ENCODE measurements at regions of chr11 and their contacts with region 1.

Region 1: GRCh38 chr11:71977743-71978418 is 20.8 kb upstream of the IL18BP start:
- DNase-seq: peak in 5 of 10 donors; percentile 55 to 82 (median 62)
- H3K4me3 ChIP-seq: no peak overlapping the region
- H3K27ac ChIP-seq: peak overlapping the region in 26 of 59 donors; percentile 1 to 86 (median 42)
- H3K27me3 ChIP-seq: no peaks in the 10 kb centered on the region
- CTCF ChIP-seq: peak; percentile 62 to 89 (median 80)

Region 2: GRCh38 chr11:71962428-71963038 is 15.3 kb before region 1 on chr11:
- intact Hi-C with region 1: no loop called
- DNase-seq: no peak
- H3K4me3 ChIP-seq: no peak overlapping the region
- H3K27ac ChIP-seq: peak overlapping the region in 18 of 59 donors; percentile 0 to 47 (median 29)
- H3K27me3 ChIP-seq: no peaks in the 10 kb centered on the region
- CTCF ChIP-seq: no peak

Region 3: DNA sequence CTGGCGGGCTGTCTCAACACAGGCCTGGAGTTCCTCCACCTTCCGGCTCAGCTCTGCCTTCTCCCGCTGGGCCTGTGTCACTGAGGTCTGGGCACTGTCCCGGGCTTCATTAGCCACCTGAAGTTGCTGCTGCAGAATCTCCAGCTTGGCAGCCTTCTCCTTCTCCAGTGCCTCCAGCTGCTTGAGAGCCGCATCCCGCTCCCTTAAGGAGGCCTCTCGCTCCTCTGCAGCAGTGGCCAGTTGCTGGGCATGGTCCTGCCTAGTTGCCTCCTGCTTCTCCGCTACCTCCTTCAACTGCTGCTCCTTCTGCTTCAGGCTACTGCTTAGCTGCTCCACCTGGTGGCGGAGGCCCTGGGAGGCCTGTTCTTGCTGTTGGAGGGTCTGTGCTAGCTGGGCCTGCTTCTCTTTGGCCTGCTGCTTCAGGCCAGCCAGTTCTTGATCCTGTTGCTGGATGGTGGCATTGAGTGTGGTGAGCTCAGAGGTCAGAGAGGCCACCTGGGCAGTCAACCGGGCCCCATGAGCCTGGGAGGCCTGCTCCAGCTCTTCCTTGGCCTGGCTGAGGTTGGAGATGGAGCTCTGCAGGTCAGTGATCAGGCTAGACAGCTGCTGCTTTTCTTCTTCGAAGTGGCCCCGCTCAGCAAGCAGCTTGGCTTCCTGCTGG is 37.8 kb after region 1 on chr11:
- intact Hi-C with region 1: loop called (anchors 5 kb)
- DNase-seq: peak in 2 of 10 donors; percentile 40 to 45
- H3K4me3 ChIP-seq: no peak overlapping the region
- H3K27ac ChIP-seq: peak overlapping the region in 51 of 59 donors; percentile 13 to 92 (median 84)
- H3K27me3 ChIP-seq: no peaks in the 10 kb centered on the region
- CTCF ChIP-seq: peak in 52 of 56 donors; percentile 13 to 58 (median 42)

Region 4: DNA sequence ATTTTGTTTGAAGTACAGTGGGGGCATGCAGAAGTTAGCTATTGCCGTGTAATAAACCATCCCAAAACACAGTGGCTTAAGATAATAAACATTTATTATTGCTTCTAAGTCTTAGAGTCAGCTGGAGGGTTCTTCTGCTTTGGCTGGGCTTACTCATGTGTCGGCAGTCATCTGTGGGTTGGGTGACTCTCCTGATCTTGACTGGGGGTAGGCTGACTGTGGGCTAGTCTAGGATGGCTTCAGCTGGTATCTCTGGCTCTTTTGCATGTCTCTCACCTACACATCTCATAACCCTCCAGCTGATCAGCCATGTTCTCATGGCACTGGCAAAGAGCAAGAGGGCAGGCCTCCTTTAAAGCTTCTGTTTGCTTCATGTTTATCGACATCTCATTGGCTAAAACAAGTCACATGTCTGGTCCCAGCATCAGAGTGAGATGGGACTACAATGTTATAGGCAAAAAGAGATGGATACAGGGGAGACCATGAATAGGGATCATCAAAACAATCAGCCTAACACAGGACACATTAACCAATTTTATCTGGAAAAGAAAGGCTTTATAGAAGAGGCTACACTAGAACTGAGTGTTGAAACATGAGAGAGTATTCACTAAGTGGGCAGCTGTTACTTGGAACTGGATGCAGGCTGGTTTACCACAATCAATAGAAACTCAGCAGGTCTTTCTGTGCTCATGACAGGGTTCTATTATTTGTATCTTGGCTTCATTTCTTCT is 107.9 kb after region 1 on chr11:
- intact Hi-C with region 1: loop called in 1 of 2 experiments (anchors 5 kb)
- DNase-seq: no peak
- H3K4me3 ChIP-seq: peak overlapping the region in 28 of 59 donors; percentile 2 to 45 (median 18)
- H3K27ac ChIP-seq: peak overlapping the region; percentile 35 to 99 (median 90)
- H3K27me3 ChIP-seq: no peaks in the 10 kb centered on the region
- CTCF ChIP-seq: peak in 4 of 56 donors; percentile 7 to 19 (median 12)

Region 5: GRCh38 chr11:72102946-72103753 is 125.3 kb after region 1 on chr11 and contains the start of gene LAMTOR1:
- intact Hi-C with region 1: loop called in 1 of 2 experiments (anchors 5 kb)
- DNase-seq: peak; percentile 97 to 99 (median 99)
- H3K4me3 ChIP-seq: peak within 1 kb of the TSS; percentile 68 to 100 (median 93)
- H3K27ac ChIP-seq: peak within 1 kb of the TSS; percentile 86 to 100 (median 98)
- H3K27me3 ChIP-seq: no peaks in the 10 kb centered on the region
- CTCF ChIP-seq: peak in 47 of 56 donors; percentile 7 to 62 (median 40)
- total RNA-seq, gene LAMTOR1: 54.1 to 105 (median 74.6) TPM